A549 (cell line): ENCODE measurements at regions of chr10 and their contacts with region 1.

Region 1: DNA sequence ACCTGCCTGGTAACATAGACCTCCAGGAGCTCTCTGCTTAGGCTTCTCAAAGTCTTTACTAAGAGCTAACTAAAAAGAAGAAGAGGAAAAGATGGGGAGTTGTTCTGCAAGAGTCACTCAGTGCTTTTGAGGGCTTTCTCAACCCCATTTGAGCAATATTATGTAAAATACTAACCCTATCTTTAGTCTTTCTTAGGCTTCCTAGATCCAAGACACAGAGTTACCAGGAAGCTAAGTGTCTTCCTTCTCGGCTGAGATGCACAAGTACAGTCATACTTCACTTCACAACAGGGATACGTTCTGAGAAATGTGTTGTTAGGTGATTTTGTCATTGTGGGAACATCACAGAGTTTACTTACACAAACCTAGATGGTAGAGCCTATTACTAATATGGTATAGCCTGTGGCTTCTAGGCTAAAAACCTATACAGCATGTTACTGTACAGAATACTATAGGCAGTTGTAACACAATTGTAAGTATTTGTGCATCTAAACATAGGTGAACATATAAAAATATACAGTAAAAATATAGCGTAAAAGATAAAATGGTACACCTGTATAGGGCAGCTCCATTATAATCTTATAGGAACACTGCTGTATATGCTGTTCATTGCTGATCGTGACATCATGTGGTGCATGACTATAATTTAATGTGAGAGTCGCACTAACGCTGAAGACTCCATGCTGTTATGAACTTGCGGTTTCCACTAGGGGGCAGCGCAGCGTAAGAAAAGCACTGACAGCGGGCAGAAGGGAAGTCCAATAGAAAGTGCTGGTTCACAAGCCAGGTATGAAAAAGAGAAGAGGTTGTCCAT is 16.3 kb downstream of the ANKRD22 start:
- DNase-seq: peak; percentile 62 to 87
- ATAC-seq: peak; percentile 98 to 99
- H3K4me3 ChIP-seq: no peak overlapping the region
- H3K27ac ChIP-seq: peak overlapping the region in 1 of 2 experiments; percentile 25; a peak in 1 of 6 replicates
- H3K4me1 ChIP-seq: peaks cover 13% of the 10 kb centered on the region
- CTCF ChIP-seq: peak; percentile 96
- EP300 ChIP-seq: no peak
- POLR2A ChIP-seq: no peak
- RAD21 ChIP-seq: peak; percentile 99

Region 2: GRCh38 chr10:88565072-88565471 is 270.2 kb before region 1 on chr10:
- CTCF ChIA-PET with region 1: interaction called, 14 read pairs
- POLR2A ChIA-PET with region 1: no interaction called
- DNase-seq: peak; percentile 15 to 39
- ATAC-seq: peak; percentile 81 to 89
- H3K4me3 ChIP-seq: no peak overlapping the region
- H3K27ac ChIP-seq: no peak overlapping the region
- H3K4me1 ChIP-seq: peaks cover 10% of the 10 kb centered on the region; the same call in 2 of the 3 replicates
- CTCF ChIP-seq: peak; percentile 64
- EP300 ChIP-seq: no peak
- POLR2A ChIP-seq: no peak
- RAD21 ChIP-seq: peak; percentile 82 to 85

Region 3: GRCh38 chr10:88783724-88784123 is 51.6 kb before region 1 on chr10:
- CTCF ChIA-PET with region 1: no interaction called
- POLR2A ChIA-PET with region 1: no interaction called
- DNase-seq: no peak
- ATAC-seq: no peak
- H3K4me3 ChIP-seq: no peak overlapping the region
- H3K27ac ChIP-seq: no peak overlapping the region
- H3K4me1 ChIP-seq: no peaks in the 10 kb centered on the region
- CTCF ChIP-seq: no peak
- EP300 ChIP-seq: no peak
- POLR2A ChIP-seq: no peak
- RAD21 ChIP-seq: no peak

Region 4: DNA sequence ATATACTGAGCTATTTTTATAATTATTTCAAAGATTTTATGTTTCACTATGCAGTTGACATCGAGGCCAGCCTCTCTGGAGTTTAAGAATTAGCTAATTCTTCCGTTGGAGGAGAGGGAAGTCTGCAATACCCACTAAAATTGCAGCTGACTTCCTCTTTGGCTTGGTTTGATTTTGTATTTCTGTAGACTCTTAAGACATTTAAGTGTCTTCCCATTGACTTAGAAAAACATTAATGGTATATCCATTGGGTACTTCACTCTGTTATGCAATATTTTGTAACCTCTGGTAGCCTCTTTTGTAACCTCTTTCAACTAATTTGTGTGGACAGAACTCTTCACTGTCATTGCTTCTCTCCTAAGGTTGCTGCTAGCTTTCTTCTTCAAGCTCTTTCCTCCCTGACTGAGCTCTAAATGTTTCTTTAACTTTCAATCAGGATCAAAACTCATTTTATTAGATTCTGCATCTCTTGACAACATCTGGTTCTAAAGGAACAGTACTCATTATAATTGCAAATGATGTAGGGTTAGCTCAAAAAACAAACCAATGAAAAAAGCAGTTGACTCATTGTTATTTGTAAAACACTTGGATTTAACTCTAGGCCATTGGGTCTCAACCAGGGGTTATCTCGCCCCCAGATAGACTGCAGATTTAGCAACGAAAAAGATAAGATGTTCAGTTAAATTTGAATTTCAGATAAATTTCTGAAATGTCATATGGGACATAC is 18.0 kb after region 1 on chr10:
- CTCF ChIA-PET with region 1: interaction called, 47 read pairs
- POLR2A ChIA-PET with region 1: no interaction called
- DNase-seq: no peak
- ATAC-seq: no peak
- H3K4me3 ChIP-seq: no peak overlapping the region
- H3K27ac ChIP-seq: no peak overlapping the region
- H3K4me1 ChIP-seq: peaks cover 33% of the 10 kb centered on the region
- CTCF ChIP-seq: no peak
- EP300 ChIP-seq: no peak
- POLR2A ChIP-seq: no peak
- RAD21 ChIP-seq: no peak

Region 5: GRCh38 chr10:88880282-88881076 is 45.2 kb after region 1 on chr10:
- CTCF ChIA-PET with region 1: interaction called, 58 read pairs
- POLR2A ChIA-PET with region 1: interaction called, 5 read pairs
- DNase-seq: peak; percentile 69 to 86
- ATAC-seq: peak; percentile 90 to 92
- H3K4me3 ChIP-seq: peak overlapping the region; percentile 49
- H3K27ac ChIP-seq: peak overlapping the region; percentile 97 to 98
- H3K4me1 ChIP-seq: peaks cover 33% of the 10 kb centered on the region
- CTCF ChIP-seq: peak; percentile 37; the same call in 2 of the 3 replicates
- EP300 ChIP-seq: no peak
- POLR2A ChIP-seq: peak; percentile 53
- RAD21 ChIP-seq: 0 out of 5 replicates have a peak, but pooled peaks of 1 of the 2 experiments have one; percentile 13

Region 6: DNA sequence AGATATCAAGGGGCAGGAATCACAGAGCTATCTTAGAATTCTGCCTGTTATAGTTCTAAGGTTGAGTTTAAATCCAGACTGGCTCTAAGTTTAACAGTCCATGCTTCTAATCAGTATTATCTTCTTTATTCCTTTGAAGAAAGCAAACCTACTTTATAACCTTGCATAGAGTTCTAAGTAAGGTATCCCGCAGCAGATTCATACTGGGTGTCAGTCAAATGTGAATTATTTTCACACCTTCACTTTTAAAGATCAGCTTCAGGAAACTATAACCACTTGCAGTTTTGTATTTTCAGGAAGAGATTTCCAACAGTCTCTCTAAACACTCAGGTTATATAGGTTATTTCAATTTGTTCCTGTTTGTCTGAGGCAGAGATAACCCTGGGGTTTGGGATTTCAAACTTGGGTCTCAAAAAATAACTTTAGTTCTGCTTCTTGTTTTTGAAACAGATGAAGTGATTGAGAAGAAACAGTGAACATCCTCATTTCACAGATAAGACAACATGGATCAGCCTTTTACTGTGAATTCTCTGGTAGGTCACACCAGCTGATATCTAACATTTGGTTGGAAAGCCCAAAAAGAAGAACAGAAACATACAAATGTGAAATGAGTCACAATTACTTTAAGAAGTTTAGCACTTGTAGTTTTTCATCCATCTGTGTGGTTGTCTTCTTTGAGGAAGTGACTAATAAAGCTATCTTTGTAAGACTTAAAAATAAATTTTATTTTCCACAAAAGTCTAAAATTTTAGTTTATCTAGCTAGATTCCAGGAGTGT is 66.1 kb after region 1 on chr10:
- CTCF ChIA-PET with region 1: interaction called, 53 read pairs
- POLR2A ChIA-PET with region 1: no interaction called
- DNase-seq: no peak
- ATAC-seq: no peak
- H3K4me3 ChIP-seq: no peak overlapping the region
- H3K27ac ChIP-seq: no peak overlapping the region
- H3K4me1 ChIP-seq: peaks cover 43% of the 10 kb centered on the region
- CTCF ChIP-seq: no peak
- EP300 ChIP-seq: no peak
- POLR2A ChIP-seq: no peak
- RAD21 ChIP-seq: no peak

Region 7: DNA sequence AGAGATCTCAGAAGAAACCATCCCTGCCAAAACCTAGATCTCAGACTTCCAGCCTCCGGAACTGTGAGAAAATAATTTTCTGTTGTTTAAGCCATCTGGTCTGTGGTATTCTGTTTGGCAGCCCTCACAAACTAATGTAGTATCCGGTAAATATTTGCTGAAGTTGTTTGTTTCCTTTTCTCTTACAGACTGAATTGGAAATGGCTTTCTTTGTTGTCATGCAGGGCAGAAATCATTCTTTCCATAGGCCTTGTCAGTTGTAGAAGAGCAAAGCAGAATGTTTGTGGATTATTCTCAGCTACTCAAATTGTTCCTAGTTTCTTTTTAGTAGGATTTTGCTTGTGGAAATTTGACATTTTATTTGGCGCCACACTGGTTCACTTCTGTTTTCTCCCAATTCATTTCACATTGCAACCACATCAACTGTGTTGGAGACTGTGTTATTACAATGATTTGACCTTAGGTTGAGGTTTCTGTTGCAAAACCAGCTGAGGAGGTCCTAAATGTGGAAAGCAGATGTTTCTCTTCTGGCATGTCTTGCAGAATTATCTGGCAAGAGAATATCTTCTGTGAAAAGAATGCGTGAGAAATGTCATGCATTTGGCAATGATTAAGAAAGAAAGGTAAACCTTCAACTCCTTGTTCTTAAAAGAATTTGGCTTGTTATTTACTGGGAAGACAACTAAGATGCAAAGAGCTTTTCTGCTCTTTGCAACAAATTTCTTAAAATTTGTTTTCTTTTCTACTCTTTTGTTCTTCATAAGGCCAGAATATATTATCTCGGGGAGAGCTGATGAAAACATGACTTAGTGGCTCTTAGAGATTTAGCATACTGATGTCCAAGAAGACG is 91.5 kb after region 1 on chr10:
- CTCF ChIA-PET with region 1: interaction called, 397 read pairs
- POLR2A ChIA-PET with region 1: no interaction called
- DNase-seq: no peak
- ATAC-seq: no peak
- H3K4me3 ChIP-seq: no peak overlapping the region
- H3K27ac ChIP-seq: no peak overlapping the region
- H3K4me1 ChIP-seq: no peaks in the 10 kb centered on the region
- CTCF ChIP-seq: no peak
- EP300 ChIP-seq: no peak
- POLR2A ChIP-seq: no peak
- RAD21 ChIP-seq: no peak

Region 8: DNA sequence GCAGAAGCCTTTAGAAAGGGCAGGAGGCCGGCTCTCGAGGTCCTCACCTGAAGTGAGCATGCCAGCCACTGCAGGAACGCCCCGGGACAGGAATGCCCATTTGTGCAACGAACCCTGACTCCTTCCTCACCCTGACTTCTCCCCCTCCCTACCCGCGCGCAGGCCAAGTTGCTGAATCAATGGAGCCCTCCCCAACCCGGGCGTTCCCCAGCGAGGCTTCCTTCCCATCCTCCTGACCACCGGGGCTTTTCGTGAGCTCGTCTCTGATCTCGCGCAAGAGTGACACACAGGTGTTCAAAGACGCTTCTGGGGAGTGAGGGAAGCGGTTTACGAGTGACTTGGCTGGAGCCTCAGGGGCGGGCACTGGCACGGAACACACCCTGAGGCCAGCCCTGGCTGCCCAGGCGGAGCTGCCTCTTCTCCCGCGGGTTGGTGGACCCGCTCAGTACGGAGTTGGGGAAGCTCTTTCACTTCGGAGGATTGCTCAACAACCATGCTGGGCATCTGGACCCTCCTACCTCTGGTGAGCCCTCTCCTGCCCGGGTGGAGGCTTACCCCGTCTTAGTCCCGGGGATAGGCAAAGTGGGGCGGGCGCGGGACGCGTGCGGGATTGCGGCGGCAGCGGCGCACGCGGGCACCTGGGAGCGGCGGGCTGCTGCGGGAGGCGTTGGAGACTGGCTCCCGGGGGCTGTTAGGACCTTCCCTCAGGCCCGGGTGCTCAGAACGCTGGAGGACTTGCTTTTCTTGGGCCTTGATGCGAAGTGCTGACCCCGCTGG is 155.3 kb after region 1 on chr10 and contains the start of gene FAS:
- CTCF ChIA-PET with region 1: interaction called, 19 read pairs
- POLR2A ChIA-PET with region 1: no interaction called
- DNase-seq: peak; percentile 66 to 69
- ATAC-seq: peak; percentile 89 to 92
- H3K4me3 ChIP-seq: peak within 1 kb of the TSS; percentile 59
- H3K27ac ChIP-seq: peak within 1 kb of the TSS; percentile 85 to 96
- H3K4me1 ChIP-seq: peaks cover 31% of the 10 kb centered on the region; the same call in 2 of the 3 replicates
- CTCF ChIP-seq: no peak
- EP300 ChIP-seq: no peak
- POLR2A ChIP-seq: 0 out of 2 replicates have a peak, but pooled peaks have one; percentile 33
- RAD21 ChIP-seq: no peak
- polyA plus RNA-seq, gene FAS: 29.5 and 30.1 TPM in 2 replicates